ENCODE measurements at regions of chr11 and their contacts with region 1.

Region 1: GRCh38 chr11:798093-798713 is at the start of gene SLC25A22:
- DNase-seq: peak; percentile 67 to 93 (median 83)
- ATAC-seq: peak; percentile 56
- H3K4me3 ChIP-seq: peak within 1 kb of the TSS; percentile 92 to 99
- H3K4me3 Mint-ChIP-seq: peak within 1 kb of the TSS; percentile 91
- H3K27ac ChIP-seq: peak within 1 kb of the TSS; percentile 78 to 96
- H3K27ac Mint-ChIP-seq: peak within 1 kb of the TSS; percentile 94
- H3K4me1 ChIP-seq: peaks cover 25% of the 10 kb centered on the region
- H3K4me1 Mint-ChIP-seq: peaks cover 16% of the 10 kb centered on the region
- H3K27me3 ChIP-seq: no peaks in the 10 kb centered on the region
- H3K27me3 Mint-ChIP-seq: no peaks in the 10 kb centered on the region
- CTCF ChIP-seq: peak; percentile 81
- total RNA-seq, gene SLC25A22: 11.6 to 15.7 TPM

Region 2: DNA sequence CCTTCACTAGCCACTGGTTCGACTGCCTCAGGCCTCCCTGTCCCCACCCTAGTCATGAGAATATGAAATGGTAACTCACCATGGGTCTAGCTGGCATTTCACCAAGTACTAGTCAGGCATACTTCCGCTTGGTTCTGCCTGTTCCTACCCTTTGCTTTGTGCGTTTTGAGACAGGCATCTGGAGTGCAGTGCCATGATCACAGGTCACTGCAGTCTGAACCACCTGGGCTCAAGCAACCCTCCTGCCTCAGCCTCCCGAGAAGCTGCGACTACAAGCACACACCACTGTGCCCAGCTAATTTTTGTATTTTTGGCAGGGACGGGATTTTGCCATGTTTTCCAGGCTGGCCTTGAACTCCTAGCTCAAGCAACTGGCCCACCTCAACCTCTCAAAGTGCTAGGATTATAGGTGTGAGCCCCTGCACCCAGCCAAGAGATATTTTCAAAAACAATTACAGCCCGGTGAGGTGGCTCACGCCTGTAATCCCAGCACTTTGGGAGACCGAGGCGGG is 277.0 kb before region 1 on chr11:
- CTCF ChIA-PET with region 1: no interaction called
- POLR2A ChIA-PET with region 1: no interaction called
- intact Hi-C with region 1: no loop called
- DNase-seq: no peak
- ATAC-seq: no peak
- H3K4me3 ChIP-seq: no peak overlapping the region
- H3K4me3 Mint-ChIP-seq: no peak overlapping the region
- H3K27ac ChIP-seq: no peak overlapping the region
- H3K27ac Mint-ChIP-seq: no peak overlapping the region
- H3K4me1 ChIP-seq: peaks cover 4% of the 10 kb centered on the region
- H3K4me1 Mint-ChIP-seq: peaks cover 5% of the 10 kb centered on the region
- H3K27me3 ChIP-seq: no peaks in the 10 kb centered on the region
- H3K27me3 Mint-ChIP-seq: no peaks in the 10 kb centered on the region
- CTCF ChIP-seq: no peak

Region 3: GRCh38 chr11:535519-536454 is 262.4 kb before region 1 on chr11 and contains the start of gene HRAS:
- CTCF ChIA-PET with region 1: no interaction called
- POLR2A ChIA-PET with region 1: no interaction called
- intact Hi-C with region 1: loop called (anchors 1 kb)
- DNase-seq: peak; percentile 92 to 98 (median 97)
- ATAC-seq: peak; percentile 88
- H3K4me3 ChIP-seq: peak within 1 kb of the TSS; percentile 60 to 66
- H3K4me3 Mint-ChIP-seq: peak within 1 kb of the TSS; percentile 93
- H3K27ac ChIP-seq: peak within 1 kb of the TSS; percentile 73 to 89
- H3K27ac Mint-ChIP-seq: peak within 1 kb of the TSS; percentile 95
- H3K4me1 ChIP-seq: peaks cover 28% of the 10 kb centered on the region
- H3K4me1 Mint-ChIP-seq: peaks cover 24% of the 10 kb centered on the region
- H3K27me3 ChIP-seq: no peaks in the 10 kb centered on the region
- H3K27me3 Mint-ChIP-seq: no peaks in the 10 kb centered on the region
- CTCF ChIP-seq: no peak
- total RNA-seq, gene HRAS: 25.2 to 25.5 TPM

Region 4: DNA sequence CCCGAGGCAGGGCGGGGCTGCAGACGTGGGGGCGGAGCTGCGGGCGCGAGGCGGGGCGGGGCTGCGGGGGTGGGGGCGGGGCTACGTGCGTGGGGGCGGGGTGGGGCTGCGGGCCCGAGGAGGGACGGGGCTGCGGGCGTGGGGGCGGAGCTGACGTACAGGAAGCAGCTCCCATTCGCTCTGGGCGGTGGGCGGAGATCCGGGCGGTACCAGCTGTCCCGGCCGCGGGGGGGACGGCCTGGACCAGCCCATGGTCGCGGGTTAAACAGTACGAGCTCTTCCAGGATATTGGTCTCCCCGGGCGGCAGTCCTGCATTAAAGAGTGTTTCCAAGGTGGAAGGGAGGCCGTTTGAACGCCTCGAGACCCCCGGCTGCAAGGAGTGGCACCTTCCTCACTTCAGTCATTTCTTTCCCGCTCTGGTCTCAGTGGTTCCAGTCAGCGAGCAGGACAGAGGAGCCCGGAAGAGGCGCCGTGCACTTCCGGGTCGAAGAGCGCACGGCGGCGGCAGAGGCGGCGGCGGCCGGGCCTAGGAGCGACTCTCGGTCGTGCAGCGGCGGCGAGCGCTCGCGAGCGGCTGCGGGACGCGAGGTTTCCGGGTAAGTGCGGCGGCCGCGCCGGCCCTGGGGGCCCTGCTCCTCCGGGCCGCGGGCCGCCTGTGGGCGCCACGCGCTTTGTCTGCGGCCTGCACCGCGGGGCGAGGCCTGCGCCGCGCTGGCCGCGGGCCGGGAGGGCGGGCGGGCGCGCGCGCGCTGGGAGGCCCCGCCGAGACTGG is 222.0 kb before region 1 on chr11 and contains the start of gene PHRF1:
- CTCF ChIA-PET with region 1: no interaction called
- POLR2A ChIA-PET with region 1: no interaction called
- intact Hi-C with region 1: loop called in 1 of 2 experiments (anchors 1 kb)
- DNase-seq: peak; percentile 91 to 98 (median 96)
- ATAC-seq: peak; percentile 88
- H3K4me3 ChIP-seq: peak within 1 kb of the TSS; percentile 89 to 93
- H3K4me3 Mint-ChIP-seq: peak within 1 kb of the TSS; percentile 98
- H3K27ac ChIP-seq: peak within 1 kb of the TSS; percentile 84 to 95
- H3K27ac Mint-ChIP-seq: peak within 1 kb of the TSS; percentile 96
- H3K4me1 ChIP-seq: peaks cover 46% of the 10 kb centered on the region
- H3K4me1 Mint-ChIP-seq: peaks cover 54% of the 10 kb centered on the region
- H3K27me3 ChIP-seq: no peaks in the 10 kb centered on the region
- H3K27me3 Mint-ChIP-seq: peaks cover 2% of the 10 kb centered on the region
- CTCF ChIP-seq: no peak
- total RNA-seq, gene PHRF1: 43.2 to 44.9 TPM

Region 5: GRCh38 chr11:587978-588380 is 210.2 kb before region 1 on chr11:
- CTCF ChIA-PET with region 1: no interaction called
- POLR2A ChIA-PET with region 1: no interaction called
- intact Hi-C with region 1: no loop called
- DNase-seq: peak; percentile 42 to 95 (median 81)
- ATAC-seq: peak; percentile 95
- H3K4me3 ChIP-seq: peak overlapping the region in 1 of 2 experiments; percentile 3
- H3K4me3 Mint-ChIP-seq: peak overlapping the region; percentile 69
- H3K27ac ChIP-seq: peak overlapping the region; percentile 60 to 76
- H3K27ac Mint-ChIP-seq: peak overlapping the region; percentile 99
- H3K4me1 ChIP-seq: peaks cover 20% of the 10 kb centered on the region
- H3K4me1 Mint-ChIP-seq: peaks cover 29% of the 10 kb centered on the region
- H3K27me3 ChIP-seq: no peaks in the 10 kb centered on the region
- H3K27me3 Mint-ChIP-seq: no peaks in the 10 kb centered on the region
- CTCF ChIP-seq: no peak

Region 6: GRCh38 chr11:747158-748006 is 50.8 kb before region 1 on chr11 and contains the start of gene TALDO1:
- CTCF ChIA-PET with region 1: interaction called, 3 read pairs
- POLR2A ChIA-PET with region 1: no interaction called
- intact Hi-C with region 1: loop called (anchors 5 kb)
- DNase-seq: peak; percentile 43 to 88 (median 79)
- ATAC-seq: peak; percentile 82
- H3K4me3 ChIP-seq: peak within 1 kb of the TSS; percentile 55 to 83
- H3K4me3 Mint-ChIP-seq: peak within 1 kb of the TSS; percentile 84
- H3K27ac ChIP-seq: peak within 1 kb of the TSS in 1 of 2 experiments; percentile 37
- H3K27ac Mint-ChIP-seq: peak within 1 kb of the TSS; percentile 79
- H3K4me1 ChIP-seq: peaks cover 17% of the 10 kb centered on the region
- H3K4me1 Mint-ChIP-seq: peaks cover 22% of the 10 kb centered on the region
- H3K27me3 ChIP-seq: no peaks in the 10 kb centered on the region
- H3K27me3 Mint-ChIP-seq: no peaks in the 10 kb centered on the region
- CTCF ChIP-seq: no peak
- total RNA-seq, gene TALDO1: 30.2 to 31.0 TPM

Region 7: GRCh38 chr11:819129-819931 is 21.1 kb after region 1 on chr11:
- CTCF ChIA-PET with region 1: interaction called, 4 read pairs
- POLR2A ChIA-PET with region 1: interaction called, 17 read pairs
- intact Hi-C with region 1: loop called in 1 of 2 experiments (anchors 1 kb)
- DNase-seq: peak; percentile 85 to 96 (median 92)
- ATAC-seq: peak; percentile 77
- H3K4me3 ChIP-seq: peak overlapping the region; percentile 67 to 94
- H3K4me3 Mint-ChIP-seq: peak overlapping the region; percentile 87
- H3K27ac ChIP-seq: peak overlapping the region; percentile 78 to 88
- H3K27ac Mint-ChIP-seq: peak overlapping the region; percentile 88
- H3K4me1 ChIP-seq: peaks cover 21% of the 10 kb centered on the region
- H3K4me1 Mint-ChIP-seq: peaks cover 11% of the 10 kb centered on the region
- H3K27me3 ChIP-seq: no peaks in the 10 kb centered on the region
- H3K27me3 Mint-ChIP-seq: no peaks in the 10 kb centered on the region
- CTCF ChIP-seq: no peak